HEK293 (cell line): ENCODE measurements at regions of chr1 and their contacts with region 1.

Region 1: DNA sequence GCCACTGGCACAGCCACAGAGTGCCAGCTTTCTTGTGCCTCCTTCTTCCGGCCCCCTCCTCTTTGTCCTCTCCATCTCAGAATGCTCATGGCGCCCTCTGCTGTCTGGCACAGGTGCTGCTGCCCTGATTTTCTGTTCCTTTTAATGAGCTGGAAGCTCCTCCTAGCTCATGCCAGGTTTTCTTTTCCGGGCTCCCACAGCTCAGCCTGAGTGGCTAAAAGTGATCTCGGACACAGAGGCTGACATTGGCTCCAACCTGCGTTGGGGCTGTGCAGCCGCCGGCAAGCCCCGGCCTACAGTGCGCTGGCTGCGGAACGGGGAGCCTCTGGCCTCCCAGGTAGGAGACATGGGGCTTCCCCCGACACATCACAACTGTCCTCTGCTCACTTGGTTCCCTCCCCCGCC is 18.7 kb downstream of the CNTN2 start:
- H3K4me3 ChIP-seq: no peak overlapping the region
- H3K27ac ChIP-seq: no peak overlapping the region
- H3K4me1 ChIP-seq: no peaks in the 10 kb centered on the region
- CTCF ChIP-seq: peak; percentile 82

Region 2: DNA sequence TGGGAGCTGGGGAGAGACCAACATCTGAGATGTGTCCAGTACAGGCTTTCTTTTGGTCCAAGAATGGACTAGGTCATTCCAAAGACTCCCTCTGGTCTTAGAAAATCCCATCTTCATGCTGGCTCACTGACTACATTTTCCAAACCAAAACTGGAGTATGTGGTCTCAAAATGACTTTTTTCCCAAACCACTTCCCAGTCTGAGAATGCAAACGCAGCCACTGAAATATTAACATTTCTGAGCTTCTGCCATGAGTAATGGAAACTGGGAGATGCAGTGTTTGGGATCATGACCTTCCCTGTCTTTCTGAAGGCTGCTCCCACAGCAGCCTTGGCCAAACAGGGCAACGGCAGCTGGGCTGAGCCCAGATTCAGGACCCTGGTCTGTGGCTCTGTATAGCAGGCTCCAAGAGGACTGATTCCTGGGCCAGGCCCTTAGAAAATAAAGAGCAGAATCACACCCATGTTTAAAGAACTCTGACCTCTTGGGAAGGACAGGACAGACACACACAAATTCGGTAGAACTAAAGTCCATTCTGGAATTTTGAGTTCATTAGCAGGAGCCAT is 80.7 kb before region 1 on chr1:
- CTCF ChIA-PET with region 1: interaction called, 282 read pairs
- POLR2A ChIA-PET with region 1: no interaction called
- H3K4me3 ChIP-seq: no peak overlapping the region
- H3K27ac ChIP-seq: no peak overlapping the region
- H3K4me1 ChIP-seq: no peaks in the 10 kb centered on the region
- CTCF ChIP-seq: no peak

Region 3: DNA sequence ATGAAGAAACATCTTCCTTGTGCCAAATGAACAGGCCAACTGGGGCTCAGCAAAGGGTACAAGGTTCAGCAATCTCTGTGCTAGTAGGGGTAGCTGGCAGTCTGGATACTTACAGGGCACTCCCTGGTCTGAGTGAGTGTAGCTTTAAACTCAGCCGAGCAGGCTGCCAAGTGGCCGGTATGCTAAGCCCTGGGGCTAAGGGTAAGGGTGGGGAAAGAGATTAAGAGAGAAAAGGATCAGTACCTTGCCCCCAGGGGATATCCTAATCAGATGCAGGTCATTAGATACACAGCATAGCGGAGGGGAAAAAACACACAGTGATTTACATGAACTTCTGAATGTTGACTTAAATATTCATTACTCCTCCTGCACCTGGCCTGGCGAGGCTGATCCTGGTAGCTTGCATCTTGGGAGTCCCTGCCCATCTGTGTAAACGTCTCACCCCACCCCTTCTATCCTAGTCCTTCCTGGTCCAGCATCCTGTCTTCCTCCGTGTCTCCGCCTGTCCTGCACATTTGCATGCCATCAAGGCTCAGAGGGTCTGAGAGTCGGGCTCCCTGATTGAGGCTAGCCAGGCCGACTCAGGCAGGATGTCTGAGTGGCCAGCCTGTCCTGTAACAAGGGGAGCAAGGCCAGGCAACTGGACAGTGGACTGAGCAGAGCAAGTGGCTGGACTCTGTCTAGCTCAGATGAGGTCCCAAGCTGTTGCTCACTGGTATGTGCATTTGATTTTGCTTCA is 58.1 kb before region 1 on chr1:
- CTCF ChIA-PET with region 1: interaction called, 22 read pairs
- POLR2A ChIA-PET with region 1: no interaction called
- H3K4me3 ChIP-seq: no peak overlapping the region
- H3K27ac ChIP-seq: no peak overlapping the region
- H3K4me1 ChIP-seq: no peaks in the 10 kb centered on the region
- CTCF ChIP-seq: no peak

Region 4: GRCh38 chr1:205037539-205037938 is 24.1 kb before region 1 on chr1:
- CTCF ChIA-PET with region 1: interaction called, 20 read pairs
- POLR2A ChIA-PET with region 1: no interaction called
- H3K4me3 ChIP-seq: no peak overlapping the region
- H3K27ac ChIP-seq: no peak overlapping the region
- H3K4me1 ChIP-seq: no peaks in the 10 kb centered on the region
- CTCF ChIP-seq: no peak

Region 5: GRCh38 chr1:205077158-205077933 is 15.7 kb after region 1 on chr1:
- CTCF ChIA-PET with region 1: interaction called, 60 read pairs
- POLR2A ChIA-PET with region 1: interaction called, 4 read pairs
- H3K4me3 ChIP-seq: no peak overlapping the region
- H3K27ac ChIP-seq: no peak overlapping the region
- H3K4me1 ChIP-seq: no peaks in the 10 kb centered on the region
- CTCF ChIP-seq: no peak

Region 6: GRCh38 chr1:205091043-205091740 is 29.5 kb after region 1 on chr1:
- CTCF ChIA-PET with region 1: interaction called, 13 read pairs
- POLR2A ChIA-PET with region 1: no interaction called
- H3K4me3 ChIP-seq: no peak overlapping the region
- H3K27ac ChIP-seq: no peak overlapping the region
- H3K4me1 ChIP-seq: no peaks in the 10 kb centered on the region
- CTCF ChIP-seq: no peak

Region 7: DNA sequence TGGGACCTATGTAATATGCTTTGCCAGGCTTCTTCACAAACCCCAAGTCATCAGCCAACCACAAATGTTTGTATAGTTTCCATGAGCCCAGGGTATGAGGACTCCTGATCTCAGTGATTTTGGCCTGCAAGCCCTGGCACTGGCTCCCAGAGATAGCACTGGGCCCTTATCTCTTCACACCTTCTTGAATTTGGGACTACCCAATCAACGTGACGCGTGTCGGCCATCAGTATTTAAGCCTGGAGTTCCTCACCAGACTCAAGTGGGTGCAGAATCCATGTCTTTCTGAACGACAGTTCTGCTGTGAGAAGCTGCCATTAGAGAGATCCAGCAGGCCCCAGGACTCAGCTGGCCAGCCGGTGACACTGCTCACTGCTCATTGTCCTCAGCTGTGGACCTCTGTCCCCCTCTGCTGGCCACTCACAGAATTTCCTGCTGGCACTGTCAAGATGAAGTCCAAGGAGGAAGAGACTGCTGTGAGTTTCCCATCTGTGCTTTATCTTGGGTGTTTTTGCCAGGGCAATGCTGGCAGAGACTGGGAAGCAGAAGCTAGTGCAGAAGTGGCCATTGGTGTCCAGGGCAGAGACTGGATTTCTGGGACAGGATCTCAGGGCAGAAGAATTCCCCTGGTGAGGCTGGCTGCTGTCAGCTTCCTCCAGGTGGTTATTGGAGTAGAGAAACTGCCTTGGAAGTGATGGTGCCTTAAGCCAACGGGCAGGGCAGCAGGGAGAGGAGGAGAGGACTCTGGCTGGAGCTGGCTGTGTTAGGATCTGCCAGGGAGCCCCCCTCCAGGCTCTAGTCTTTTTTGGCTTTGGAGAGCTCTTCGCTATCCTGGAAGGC is 194.5 kb after region 1 on chr1:
- CTCF ChIA-PET with region 1: interaction called, 26 read pairs
- POLR2A ChIA-PET with region 1: no interaction called
- H3K4me3 ChIP-seq: no peak overlapping the region
- H3K27ac ChIP-seq: no peak overlapping the region
- H3K4me1 ChIP-seq: no peaks in the 10 kb centered on the region
- CTCF ChIP-seq: peak; percentile 94